CD14-positive monocyte (primary cell): ENCODE measurements at regions of chr6 and their contacts with region 1.

Region 1: GRCh38 chr6:139375232-139376016 is 976 bp upstream of the CITED2 start:
- DNase-seq: peak; percentile 71 to 77 (median 77)
- H3K4me3 ChIP-seq: peak overlapping the region; percentile 74 to 95 (median 74)
- H3K4me3 Mint-ChIP-seq: peak overlapping the region; percentile 94 to 97
- H3K27ac ChIP-seq: peak overlapping the region; percentile 76 to 96
- H3K27ac Mint-ChIP-seq: peak overlapping the region; percentile 95 to 97 (median 96)
- H3K4me1 ChIP-seq: peaks cover 25 to 43% of the 10 kb centered on the region in 2 donors
- H3K4me1 Mint-ChIP-seq: peaks cover 47% of the 10 kb centered on the region
- H3K27me3 ChIP-seq: no peaks in the 10 kb centered on the region
- H3K27me3 Mint-ChIP-seq: peaks cover 0 to 3% (median 0%) of the 10 kb centered on the region in 3 donors
- CTCF ChIP-seq: no peak

Region 2: DNA sequence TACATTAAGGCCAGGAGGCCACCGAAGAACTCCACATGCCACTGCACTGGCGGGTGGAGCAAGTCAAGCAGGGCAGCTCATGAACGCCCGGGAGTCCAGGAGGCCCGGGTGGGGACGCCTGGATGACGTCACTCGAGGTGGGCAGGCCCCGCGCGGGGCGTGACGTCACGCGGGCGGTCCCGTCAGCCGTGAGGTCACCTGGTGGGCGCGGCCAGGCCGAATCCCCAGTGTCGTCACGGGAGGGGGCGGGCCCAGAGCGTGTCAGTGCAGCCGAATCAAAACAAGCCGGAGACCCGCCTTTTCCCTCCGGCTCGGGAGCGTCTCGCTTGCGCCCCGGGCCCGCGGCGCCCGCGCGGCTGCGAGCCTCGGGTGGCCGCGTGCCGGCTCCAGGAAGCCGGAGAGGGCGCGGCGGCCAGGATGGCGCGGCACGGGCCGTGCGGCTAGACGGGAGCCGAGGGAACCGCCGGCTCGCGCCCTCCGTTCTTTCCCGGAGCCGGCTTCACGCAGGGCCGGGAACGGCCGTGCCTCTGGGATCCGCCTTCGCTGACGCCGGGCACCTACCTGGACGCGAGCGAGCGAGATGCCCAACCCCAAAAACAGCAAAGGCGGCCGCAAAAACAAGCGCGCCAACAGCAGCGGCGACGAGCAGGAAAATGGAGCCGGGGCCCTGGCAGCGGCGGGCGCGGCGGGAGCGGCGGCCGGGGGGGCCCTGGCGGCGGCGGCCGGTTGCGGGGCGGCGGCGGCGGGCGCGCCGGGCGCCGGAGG is 240.4 kb before region 1 on chr6 and contains the start of gene HECA:
- intact Hi-C with region 1: loop called (anchors 5 to 10 kb)
- DNase-seq: peak; percentile 93 to 98 (median 97)
- H3K4me3 ChIP-seq: peak within 1 kb of the TSS; percentile 77 to 94 (median 86)
- H3K4me3 Mint-ChIP-seq: peak within 1 kb of the TSS; percentile 93 to 96
- H3K27ac ChIP-seq: peak within 1 kb of the TSS; percentile 96
- H3K27ac Mint-ChIP-seq: peak within 1 kb of the TSS; percentile 97 to 99 (median 98)
- H3K4me1 ChIP-seq: peaks cover 51 to 70% of the 10 kb centered on the region in 2 donors
- H3K4me1 Mint-ChIP-seq: peaks cover 64% of the 10 kb centered on the region
- H3K27me3 ChIP-seq: no peaks in the 10 kb centered on the region
- H3K27me3 Mint-ChIP-seq: peaks cover 0 to 6% (median 0%) of the 10 kb centered on the region in 3 donors
- CTCF ChIP-seq: no peak
- polyA plus RNA-seq, gene HECA: 2.1 to 28.7 (median 3.3) TPM

Region 3: DNA sequence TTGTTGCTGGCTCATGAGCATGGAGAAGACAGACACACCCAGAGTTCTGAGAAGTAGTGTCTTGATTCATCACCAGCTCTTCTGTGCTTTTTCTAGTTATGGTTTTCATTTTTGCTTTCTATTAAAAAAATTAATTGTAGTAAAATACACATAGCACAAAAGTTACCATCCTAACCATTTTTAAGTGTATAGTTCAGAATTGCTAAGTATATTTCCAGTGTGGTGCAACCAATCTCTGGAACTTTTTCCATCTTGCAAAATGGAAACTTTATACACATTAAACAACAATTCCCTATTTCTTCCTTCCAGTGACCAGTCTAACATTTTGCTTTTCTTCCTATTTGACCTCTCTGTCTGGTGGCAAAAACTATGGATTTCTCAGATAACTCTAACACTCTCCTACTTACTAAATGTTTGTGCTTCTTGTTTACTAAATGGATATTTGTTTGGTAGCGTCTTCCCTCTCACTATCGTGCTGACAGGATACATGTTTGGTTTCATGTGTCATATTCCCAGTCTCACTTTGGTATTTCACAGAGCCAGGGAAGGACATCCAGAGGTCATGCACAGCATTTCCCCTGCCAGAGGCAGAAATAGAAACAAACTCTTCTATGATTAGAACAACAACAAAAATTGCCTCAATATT is 124.3 kb before region 1 on chr6:
- intact Hi-C with region 1: no loop called
- DNase-seq: no peak
- H3K4me3 ChIP-seq: no peak overlapping the region
- H3K4me3 Mint-ChIP-seq: no peak overlapping the region
- H3K27ac ChIP-seq: no peak overlapping the region
- H3K27ac Mint-ChIP-seq: peak overlapping the region in 1 of 7 donors; percentile 16
- H3K4me1 ChIP-seq: no peaks in the 10 kb centered on the region
- H3K4me1 Mint-ChIP-seq: peaks cover 11% of the 10 kb centered on the region
- H3K27me3 ChIP-seq: no peaks in the 10 kb centered on the region
- H3K27me3 Mint-ChIP-seq: peaks cover 0 to 1% (median 0%) of the 10 kb centered on the region in 3 donors
- CTCF ChIP-seq: no peak

Region 4: GRCh38 chr6:139407718-139408222 is 32.3 kb after region 1 on chr6:
- intact Hi-C with region 1: no loop called
- DNase-seq: no peak
- H3K4me3 ChIP-seq: no peak overlapping the region
- H3K4me3 Mint-ChIP-seq: no peak overlapping the region
- H3K27ac ChIP-seq: no peak overlapping the region
- H3K27ac Mint-ChIP-seq: no peak overlapping the region
- H3K4me1 ChIP-seq: no peaks in the 10 kb centered on the region
- H3K4me1 Mint-ChIP-seq: no peaks in the 10 kb centered on the region
- H3K27me3 ChIP-seq: no peaks in the 10 kb centered on the region
- H3K27me3 Mint-ChIP-seq: peaks cover 0 to 2% (median 0%) of the 10 kb centered on the region in 3 donors
- CTCF ChIP-seq: no peak

Region 5: DNA sequence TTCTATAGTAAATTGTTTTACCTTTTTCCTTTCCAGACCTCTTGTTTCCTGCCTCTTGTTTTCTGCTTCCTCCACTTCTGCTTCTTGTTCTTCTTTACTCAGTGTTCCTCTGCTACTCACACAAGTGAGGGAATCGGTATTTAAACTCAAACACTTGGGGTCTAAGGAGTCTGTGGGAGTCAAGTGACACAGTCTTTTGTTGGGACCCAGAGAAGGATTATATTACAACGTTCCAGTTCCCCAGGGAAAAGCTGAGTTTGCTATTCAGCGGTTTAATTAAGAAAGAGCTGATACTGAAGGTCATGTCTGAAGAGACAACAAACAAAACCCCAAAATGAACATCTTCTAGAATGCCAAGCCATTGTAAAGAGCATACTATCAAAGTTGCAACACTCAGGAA is 106.9 kb after region 1 on chr6:
- intact Hi-C with region 1: no loop called
- DNase-seq: no peak
- H3K4me3 ChIP-seq: no peak overlapping the region
- H3K4me3 Mint-ChIP-seq: no peak overlapping the region
- H3K27ac ChIP-seq: no peak overlapping the region
- H3K27ac Mint-ChIP-seq: peak overlapping the region in 1 of 7 donors; percentile 40
- H3K4me1 ChIP-seq: peaks cover 7 to 9% of the 10 kb centered on the region in 2 donors
- H3K4me1 Mint-ChIP-seq: peaks cover 6% of the 10 kb centered on the region
- H3K27me3 ChIP-seq: no peaks in the 10 kb centered on the region
- H3K27me3 Mint-ChIP-seq: no peaks in the 10 kb centered on the region
- CTCF ChIP-seq: no peak

Region 6: DNA sequence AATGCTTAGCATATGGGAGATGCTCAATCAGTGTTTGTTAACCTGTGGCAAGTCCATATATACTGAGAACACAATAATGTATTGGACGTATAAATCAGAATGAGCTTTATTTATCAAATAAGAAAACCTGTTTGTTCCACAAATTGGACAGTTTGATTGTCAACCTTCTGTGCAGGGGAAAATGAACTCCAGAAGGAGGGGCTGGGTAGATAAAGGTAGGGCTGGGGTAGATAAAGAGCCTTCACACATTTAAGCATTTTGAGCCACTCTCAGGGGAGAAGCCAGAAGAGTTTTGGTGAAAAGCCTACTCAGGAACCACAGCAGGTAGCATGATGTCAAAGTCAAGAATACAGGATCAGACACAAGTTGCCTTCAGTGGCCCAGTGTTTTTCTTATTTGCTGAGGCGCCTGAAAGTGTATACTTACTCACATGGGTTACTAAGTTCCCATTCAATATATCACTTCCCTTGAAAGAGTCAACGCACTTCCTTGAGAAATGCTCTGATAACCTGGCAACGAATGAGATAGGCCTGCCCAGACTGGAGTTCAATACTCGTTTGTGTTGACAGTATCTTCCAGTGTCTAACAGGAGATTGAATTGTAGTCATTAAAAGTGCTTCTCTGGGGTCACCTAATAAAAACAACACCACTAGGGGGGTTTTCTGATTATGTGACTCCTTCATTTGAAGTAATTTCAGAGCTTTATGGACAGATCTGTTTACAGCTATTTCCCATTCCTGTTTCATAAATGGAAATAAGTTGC is 262.9 kb after region 1 on chr6:
- intact Hi-C with region 1: loop called in 1 of 2 experiments (anchors 10 kb)
- DNase-seq: peak in 1 of 3 donors; percentile 25
- H3K4me3 ChIP-seq: no peak overlapping the region
- H3K4me3 Mint-ChIP-seq: no peak overlapping the region
- H3K27ac ChIP-seq: peak overlapping the region in 1 of 2 donors; percentile 71
- H3K27ac Mint-ChIP-seq: peak overlapping the region; percentile 21 to 76 (median 48)
- H3K4me1 ChIP-seq: peaks cover 48 to 56% of the 10 kb centered on the region in 2 donors
- H3K4me1 Mint-ChIP-seq: peaks cover 59% of the 10 kb centered on the region
- H3K27me3 ChIP-seq: no peaks in the 10 kb centered on the region
- H3K27me3 Mint-ChIP-seq: peaks cover 0 to 3% (median 0%) of the 10 kb centered on the region in 3 donors
- CTCF ChIP-seq: no peak

Region 7: GRCh38 chr6:139764498-139764986 is 389.1 kb after region 1 on chr6:
- intact Hi-C with region 1: loop called in 1 of 2 experiments (anchors 2 kb)
- DNase-seq: peak; percentile 67 to 83 (median 80)
- H3K4me3 ChIP-seq: peak overlapping the region in 1 of 3 experiments; percentile 45
- H3K4me3 Mint-ChIP-seq: peak overlapping the region; percentile 66 to 86
- H3K27ac ChIP-seq: peak overlapping the region; percentile 64 to 93
- H3K27ac Mint-ChIP-seq: peak overlapping the region; percentile 84 to 98 (median 96)
- H3K4me1 ChIP-seq: peaks cover 35 to 42% of the 10 kb centered on the region in 2 donors
- H3K4me1 Mint-ChIP-seq: peaks cover 36% of the 10 kb centered on the region
- H3K27me3 ChIP-seq: no peaks in the 10 kb centered on the region
- H3K27me3 Mint-ChIP-seq: no peaks in the 10 kb centered on the region
- CTCF ChIP-seq: no peak

Region 8: GRCh38 chr6:139829576-139829975 is 454.2 kb after region 1 on chr6:
- intact Hi-C with region 1: no loop called
- DNase-seq: no peak
- H3K4me3 ChIP-seq: no peak overlapping the region
- H3K4me3 Mint-ChIP-seq: no peak overlapping the region
- H3K27ac ChIP-seq: no peak overlapping the region
- H3K27ac Mint-ChIP-seq: no peak overlapping the region
- H3K4me1 ChIP-seq: no peaks in the 10 kb centered on the region
- H3K4me1 Mint-ChIP-seq: peaks cover 2% of the 10 kb centered on the region
- H3K27me3 ChIP-seq: no peaks in the 10 kb centered on the region
- H3K27me3 Mint-ChIP-seq: no peaks in the 10 kb centered on the region
- CTCF ChIP-seq: no peak

Region 9: GRCh38 chr6:139919107-139920026 is 543.9 kb after region 1 on chr6:
- intact Hi-C with region 1: loop called (anchors 10 kb)
- DNase-seq: peak in 2 of 3 donors; percentile 24 to 43
- H3K4me3 ChIP-seq: peak overlapping the region; percentile 34 to 83 (median 76)
- H3K4me3 Mint-ChIP-seq: peak overlapping the region; percentile 81 to 97
- H3K27ac ChIP-seq: peak overlapping the region; percentile 83 to 87
- H3K27ac Mint-ChIP-seq: peak overlapping the region; percentile 91 to 97 (median 95)
- H3K4me1 ChIP-seq: peaks cover 36 to 38% of the 10 kb centered on the region in 2 donors
- H3K4me1 Mint-ChIP-seq: peaks cover 44% of the 10 kb centered on the region
- H3K27me3 ChIP-seq: no peaks in the 10 kb centered on the region
- H3K27me3 Mint-ChIP-seq: no peaks in the 10 kb centered on the region
- CTCF ChIP-seq: no peak